H1 (cell line): ENCODE measurements at regions of chr7 and their contacts with region 1.

Region 1: DNA sequence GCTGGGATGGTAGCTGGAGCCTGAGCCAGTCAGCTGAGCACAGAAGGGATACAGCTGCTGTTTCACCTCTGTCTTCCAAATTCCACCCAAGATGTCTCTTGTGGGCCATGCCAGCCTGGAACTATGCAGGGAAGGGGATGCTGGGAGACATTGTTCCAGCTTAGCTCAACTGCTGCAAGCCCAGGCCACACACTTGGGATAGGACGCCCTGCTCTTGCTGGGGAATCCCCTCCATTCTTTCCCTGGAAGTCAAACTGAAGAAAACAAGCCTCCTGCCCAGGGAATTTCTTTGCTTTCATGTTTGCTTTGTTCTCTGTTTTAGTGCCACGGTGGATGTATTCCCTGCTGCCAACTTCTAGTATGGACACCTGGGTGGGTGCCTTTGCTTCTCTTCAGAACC is 55.2 kb upstream of the CDK13 start:
- DNase-seq: peak in 1 of 2 experiments; percentile 40
- H3K4me3 ChIP-seq: no peak overlapping the region
- H3K27ac ChIP-seq: no peak overlapping the region
- H3K4me1 ChIP-seq: peaks cover 0 to 2% (median 0%) of the 10 kb centered on the region in 4 experiments; a peak in 2 of 7 replicates
- H3K27me3 ChIP-seq: no peaks in the 10 kb centered on the region
- CTCF ChIP-seq: no peak
- EP300 ChIP-seq: no peak
- POLR2A ChIP-seq: no peak
- RAD21 ChIP-seq: no peak

Region 2: DNA sequence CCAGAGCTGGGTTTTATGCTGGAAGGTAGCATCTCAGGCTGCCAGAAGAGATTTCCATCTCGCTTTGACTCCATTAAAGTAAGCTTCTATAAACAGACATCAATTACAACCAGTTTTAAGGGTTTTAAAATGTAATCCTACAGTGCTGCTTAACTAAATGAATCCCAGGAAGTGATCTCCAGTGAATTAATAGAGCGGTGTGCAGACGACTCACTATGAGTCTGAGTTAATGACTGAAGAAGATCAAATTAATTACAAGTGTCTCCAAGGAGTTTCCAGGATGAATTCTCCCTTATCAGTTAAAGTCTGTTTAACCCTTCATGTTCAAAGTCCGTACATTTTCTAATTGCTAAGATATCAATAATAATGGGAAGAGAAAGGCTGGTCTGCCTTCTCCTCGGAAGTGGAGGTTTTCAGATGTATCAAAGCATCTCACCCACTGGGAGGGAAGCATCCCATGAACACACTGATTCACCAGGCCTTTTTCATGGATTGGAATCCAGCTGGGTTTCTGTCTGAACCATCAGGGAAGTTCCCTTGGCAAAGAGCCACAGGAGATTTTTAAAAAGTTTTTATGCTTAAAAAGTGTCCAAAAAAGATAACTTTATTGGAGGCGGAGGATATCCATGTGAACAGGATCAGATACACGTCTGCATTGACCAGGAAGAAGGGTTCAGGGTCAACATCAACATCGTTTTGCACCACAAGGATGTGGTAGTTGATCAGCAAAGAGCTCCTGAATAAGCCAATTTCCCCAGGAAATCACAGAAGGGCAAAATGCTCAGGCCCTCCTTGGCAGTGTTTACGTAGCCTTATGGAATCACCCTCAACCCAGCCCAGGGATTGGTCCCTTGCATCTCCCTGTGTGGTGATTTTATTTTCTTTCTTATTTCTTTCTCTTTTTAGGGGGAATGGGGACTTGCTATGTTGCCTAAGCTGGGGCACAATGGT is 629.0 kb before region 1 on chr7:
- CTCF ChIA-PET with region 1: no interaction called
- POLR2A ChIA-PET with region 1: no interaction called
- DNase-seq: no peak
- H3K4me3 ChIP-seq: 0 out of 8 replicates have a peak overlapping the region, but pooled peaks of 1 of the 4 experiments have one; percentile 5
- H3K27ac ChIP-seq: no peak overlapping the region
- H3K4me1 ChIP-seq: peaks cover 0 to 9% (median 1%) of the 10 kb centered on the region in 4 experiments; a peak in 5 of 7 replicates
- H3K27me3 ChIP-seq: no peaks in the 10 kb centered on the region
- CTCF ChIP-seq: no peak
- EP300 ChIP-seq: no peak
- POLR2A ChIP-seq: no peak
- RAD21 ChIP-seq: no peak

Region 3: GRCh38 chr7:39880556-39880955 is 14.3 kb before region 1 on chr7:
- CTCF ChIA-PET with region 1: interaction called, 68 read pairs
- POLR2A ChIA-PET with region 1: interaction called, 3 read pairs
- DNase-seq: no peak
- H3K4me3 ChIP-seq: no peak overlapping the region
- H3K27ac ChIP-seq: no peak overlapping the region
- H3K4me1 ChIP-seq: peaks cover 0 to 11% (median 5%) of the 10 kb centered on the region in 4 experiments; a peak in 4 of 7 replicates
- H3K27me3 ChIP-seq: no peaks in the 10 kb centered on the region
- CTCF ChIP-seq: no peak
- EP300 ChIP-seq: no peak
- POLR2A ChIP-seq: no peak
- RAD21 ChIP-seq: no peak

Region 4: GRCh38 chr7:39910108-39910869 is 15.4 kb after region 1 on chr7:
- CTCF ChIA-PET with region 1: interaction called, 24 read pairs
- POLR2A ChIA-PET with region 1: no interaction called
- DNase-seq: no peak
- H3K4me3 ChIP-seq: no peak overlapping the region
- H3K27ac ChIP-seq: no peak overlapping the region
- H3K4me1 ChIP-seq: no peaks in the 10 kb centered on the region
- H3K27me3 ChIP-seq: no peaks in the 10 kb centered on the region
- CTCF ChIP-seq: peak in 1 of 3 experiments; percentile 10; a peak in 1 of 4 replicates
- EP300 ChIP-seq: no peak
- POLR2A ChIP-seq: no peak
- RAD21 ChIP-seq: no peak

Region 5: DNA sequence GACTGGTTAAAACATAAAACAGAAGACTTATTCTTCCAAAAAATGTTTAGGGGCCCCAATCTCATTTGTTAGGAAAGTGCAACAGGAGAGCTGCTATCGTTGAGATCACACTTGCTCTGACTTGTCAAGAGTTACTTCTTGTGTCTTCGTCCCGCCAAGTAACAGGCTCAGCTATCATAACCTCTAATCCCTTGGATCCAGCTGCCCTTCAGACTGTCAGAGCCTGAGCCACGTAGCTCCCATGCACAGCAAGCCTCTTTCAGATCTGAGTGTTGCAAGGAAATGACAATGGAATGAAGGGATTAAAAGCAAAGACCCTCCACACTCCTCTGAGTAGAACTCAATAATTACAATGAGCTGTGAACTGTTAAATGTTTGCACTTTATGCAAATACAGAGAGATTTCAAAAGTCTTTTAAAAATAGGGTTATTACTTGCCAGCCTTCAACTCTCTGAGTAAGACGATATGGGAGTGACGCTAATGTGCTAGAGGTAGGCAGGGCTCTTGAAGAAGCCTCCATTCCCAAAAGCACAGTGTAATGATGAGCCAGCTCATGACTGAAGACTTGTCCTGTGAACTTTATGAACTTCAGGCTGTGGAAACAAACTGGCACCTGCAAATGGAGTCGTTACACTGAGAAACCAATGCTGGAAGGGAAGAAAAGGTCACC is 26.7 kb after region 1 on chr7:
- CTCF ChIA-PET with region 1: interaction called, 11 read pairs
- POLR2A ChIA-PET with region 1: no interaction called
- DNase-seq: peak in 1 of 2 experiments; percentile 37
- H3K4me3 ChIP-seq: no peak overlapping the region
- H3K27ac ChIP-seq: no peak overlapping the region
- H3K4me1 ChIP-seq: peaks cover 0 to 10% (median 0%) of the 10 kb centered on the region in 4 experiments; a peak in 1 of 7 replicates
- H3K27me3 ChIP-seq: no peaks in the 10 kb centered on the region
- CTCF ChIP-seq: no peak
- EP300 ChIP-seq: no peak
- POLR2A ChIP-seq: no peak
- RAD21 ChIP-seq: no peak

Region 6: GRCh38 chr7:39958038-39958437 is 63.1 kb after region 1 on chr7:
- CTCF ChIA-PET with region 1: interaction called, 12 read pairs
- POLR2A ChIA-PET with region 1: interaction called, 3 read pairs
- DNase-seq: no peak
- H3K4me3 ChIP-seq: no peak overlapping the region
- H3K27ac ChIP-seq: no peak overlapping the region
- H3K4me1 ChIP-seq: no peaks in the 10 kb centered on the region; a peak in 1 of 7 replicates
- H3K27me3 ChIP-seq: no peaks in the 10 kb centered on the region
- CTCF ChIP-seq: no peak
- EP300 ChIP-seq: no peak
- POLR2A ChIP-seq: no peak
- RAD21 ChIP-seq: no peak

Region 7: DNA sequence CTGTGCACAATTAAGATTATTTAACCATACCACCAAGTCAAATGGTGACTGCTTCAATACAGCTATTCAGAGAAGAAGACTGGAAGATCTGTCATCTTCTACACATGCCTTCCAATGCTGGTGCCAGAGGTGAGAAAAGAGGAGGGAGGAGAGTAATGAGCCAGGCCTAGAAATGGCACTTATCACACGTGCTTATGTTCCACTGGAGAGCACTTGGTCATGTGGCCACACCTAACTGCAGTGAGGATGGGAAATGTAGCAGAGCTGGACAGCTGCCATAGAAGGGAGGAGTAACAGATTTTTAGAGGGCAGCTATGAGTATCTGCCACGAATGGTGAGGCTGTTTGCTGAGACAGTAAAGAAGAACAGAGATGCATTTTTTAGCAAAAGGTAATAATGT is 162.4 kb after region 1 on chr7:
- CTCF ChIA-PET with region 1: interaction called, 84 read pairs
- POLR2A ChIA-PET with region 1: no interaction called
- DNase-seq: no peak
- H3K4me3 ChIP-seq: no peak overlapping the region
- H3K27ac ChIP-seq: no peak overlapping the region
- H3K4me1 ChIP-seq: no peaks in the 10 kb centered on the region
- H3K27me3 ChIP-seq: no peaks in the 10 kb centered on the region
- CTCF ChIP-seq: no peak
- EP300 ChIP-seq: no peak
- POLR2A ChIP-seq: no peak
- RAD21 ChIP-seq: no peak